ENCODE measurements at regions of chr12 and their contacts with region 1.

Region 1: DNA sequence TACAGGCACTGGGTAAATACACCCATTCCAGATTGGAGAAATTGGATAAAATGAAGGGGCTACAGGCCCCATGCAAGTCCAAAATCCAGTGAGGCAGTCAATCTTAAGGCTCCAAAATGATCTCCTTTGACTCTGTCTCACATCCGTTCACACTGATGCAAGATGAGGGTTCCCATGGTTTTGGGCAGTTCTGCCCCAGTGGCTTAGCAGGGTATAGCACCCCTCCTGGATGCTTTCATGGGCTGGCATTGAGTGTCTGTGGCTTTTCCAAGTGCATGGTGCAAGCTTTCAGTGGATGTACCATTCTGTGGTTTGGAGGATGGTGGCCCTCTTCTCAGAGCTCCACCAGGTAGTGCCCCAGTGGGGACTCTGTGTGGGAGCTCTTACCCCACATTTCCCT is 427.2 kb downstream of the TRHDE start:
- DNase-seq: no peak
- H3K4me3 ChIP-seq: no peak overlapping the region
- H3K27ac ChIP-seq: no peak overlapping the region
- H3K4me1 ChIP-seq: no peaks in the 10 kb centered on the region
- H3K27me3 ChIP-seq: no peaks in the 10 kb centered on the region
- CTCF ChIP-seq: no peak
- POLR2A ChIP-seq: no peak

Region 2: DNA sequence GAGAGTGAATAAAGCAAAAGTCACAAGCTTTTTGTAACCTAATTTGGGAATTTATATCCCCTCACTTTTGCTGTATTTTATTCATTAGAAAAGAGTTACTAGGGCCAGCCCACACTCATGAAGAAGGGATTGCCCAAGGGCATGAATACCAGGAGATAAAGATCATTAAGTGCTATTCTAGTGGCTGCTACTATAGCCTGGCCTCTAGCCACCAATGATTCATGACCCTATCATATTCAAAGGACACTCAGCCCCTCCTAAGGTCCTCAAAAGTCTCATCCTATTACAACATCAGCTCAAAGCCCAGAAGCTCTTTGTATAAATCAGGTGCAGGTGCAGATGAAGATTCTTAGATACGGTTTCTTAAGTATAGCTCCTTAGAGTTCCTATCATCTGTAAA is 90.9 kb after region 1 on chr12:
- intact Hi-C with region 1: loop called in 1 of 2 experiments (anchors 5 kb)
- DNase-seq: no peak
- H3K4me3 ChIP-seq: no peak overlapping the region
- H3K27ac ChIP-seq: no peak overlapping the region
- H3K4me1 ChIP-seq: no peaks in the 10 kb centered on the region
- H3K27me3 ChIP-seq: no peaks in the 10 kb centered on the region
- CTCF ChIP-seq: no peak
- POLR2A ChIP-seq: no peak

Region 3: GRCh38 chr12:72974954-72975555 is 275.7 kb after region 1 on chr12:
- intact Hi-C with region 1: no loop called
- DNase-seq: no peak
- H3K4me3 ChIP-seq: no peak overlapping the region
- H3K27ac ChIP-seq: no peak overlapping the region
- H3K4me1 ChIP-seq: no peaks in the 10 kb centered on the region
- H3K27me3 ChIP-seq: no peaks in the 10 kb centered on the region
- CTCF ChIP-seq: no peak
- POLR2A ChIP-seq: no peak

Measured in adrenal gland (tissue), 19 donors.